Dendritic cell treated with granulocyte-macrophage colony-stimulating factor and Interleukin-4, amounts not matched to agents 40 ng/mL and 50 ng/mL, for 4 days (primary cell): ENCODE measurements at regions of chrX and their contacts with region 1.

Region 1: GRCh38 chrX:15911734-15912550 is 57.3 kb upstream of the AP1S2 start:
- H3K4me3 Mint-ChIP-seq: no peak overlapping the region
- H3K27ac Mint-ChIP-seq: peak overlapping the region; percentile 37
- H3K4me1 Mint-ChIP-seq: peaks cover 31% of the 10 kb centered on the region
- H3K27me3 Mint-ChIP-seq: no peaks in the 10 kb centered on the region

Region 2: GRCh38 chrX:15854712-15855567 is 57.0 kb before region 1 on chrX and contains the start of gene AP1S2:
- intact Hi-C with region 1: loop called (anchors 2 kb)
- H3K4me3 Mint-ChIP-seq: peak within 1 kb of the TSS; percentile 87
- H3K27ac Mint-ChIP-seq: peak within 1 kb of the TSS; percentile 100
- H3K4me1 Mint-ChIP-seq: peaks cover 19% of the 10 kb centered on the region
- H3K27me3 Mint-ChIP-seq: no peaks in the 10 kb centered on the region

Region 3: DNA sequence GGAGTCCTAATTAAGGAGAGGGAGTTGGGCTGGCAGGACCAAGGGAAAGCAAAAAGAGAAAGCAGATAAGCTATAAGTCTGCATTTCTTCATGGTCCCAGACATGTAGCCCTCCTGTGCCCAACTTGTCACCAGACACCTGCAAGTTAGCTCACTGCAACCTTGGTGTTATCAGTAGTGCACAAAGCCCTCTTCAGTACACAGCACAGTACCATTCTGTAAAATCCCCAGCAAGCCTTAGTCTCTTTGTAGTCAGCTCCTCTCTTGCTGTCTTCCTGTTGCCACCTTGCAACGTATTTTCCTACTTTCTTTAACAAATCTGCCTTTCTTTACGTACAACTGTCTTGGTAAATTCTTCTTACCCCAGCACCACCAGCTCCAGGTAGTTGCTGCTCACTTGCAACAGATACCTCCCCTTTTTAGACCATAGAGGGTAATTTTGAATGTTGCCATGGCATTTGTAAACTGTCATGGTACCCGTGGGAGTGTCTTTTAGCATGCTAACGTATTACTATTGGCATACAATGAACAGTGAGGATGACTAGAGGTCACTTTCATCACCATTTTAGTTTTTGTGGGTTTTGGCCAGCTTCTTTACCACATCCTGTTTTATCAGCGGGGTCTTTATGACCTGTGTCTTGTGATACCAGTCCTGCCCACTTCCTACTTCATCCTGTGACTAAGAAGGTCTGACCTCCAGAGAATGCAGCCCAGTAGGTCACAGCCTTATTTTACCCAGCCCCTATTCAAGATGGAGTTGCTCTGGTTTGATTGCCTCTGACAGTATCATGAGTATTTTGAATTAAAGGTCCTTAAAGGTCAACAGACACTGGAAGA is 29.0 kb before region 1 on chrX:
- intact Hi-C with region 1: loop called (anchors 1 kb)
- H3K4me3 Mint-ChIP-seq: no peak overlapping the region
- H3K27ac Mint-ChIP-seq: peak overlapping the region; percentile 50
- H3K4me1 Mint-ChIP-seq: peaks cover 28% of the 10 kb centered on the region
- H3K27me3 Mint-ChIP-seq: no peaks in the 10 kb centered on the region